ENCODE measurements at regions of chr10 and their contacts with region 1.

Region 1: DNA sequence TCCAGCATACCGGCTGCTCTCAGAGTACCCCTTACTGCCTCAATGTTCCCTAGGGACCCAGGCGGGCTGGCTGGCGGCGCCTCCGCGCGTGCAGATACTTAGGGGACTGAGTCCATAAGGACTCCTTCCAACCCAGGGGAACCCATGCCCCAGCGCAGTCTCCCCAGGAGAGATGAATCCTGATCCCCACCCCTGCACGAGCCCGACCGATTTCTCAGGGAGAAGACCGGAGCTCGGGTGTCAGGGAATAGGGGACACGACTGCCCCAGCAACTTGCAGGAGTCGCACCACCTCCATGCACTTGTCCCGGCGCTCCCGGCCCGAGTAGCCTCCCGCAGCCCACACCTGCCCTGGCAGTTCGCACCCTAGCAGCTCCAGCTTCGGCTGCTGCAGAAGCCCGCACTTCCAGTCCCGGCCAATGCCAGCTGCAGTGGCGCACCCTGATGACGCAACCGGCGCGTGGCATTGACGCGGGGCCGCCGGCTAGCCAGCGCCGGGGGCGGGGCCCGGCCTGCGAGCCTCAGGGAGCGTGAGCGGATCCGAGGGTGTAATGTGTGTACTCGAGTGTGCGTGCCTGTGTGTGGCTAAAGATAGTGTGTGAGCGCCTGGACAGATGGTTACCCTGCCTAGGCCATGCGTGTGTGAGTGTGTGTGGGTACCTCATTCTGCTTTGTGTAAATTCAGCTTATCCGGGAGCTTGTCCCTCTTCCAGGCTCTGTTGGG is at the start of gene GPAM:
- DNase-seq: peak; percentile 83 to 97
- H3K4me3 ChIP-seq: peak within 1 kb of the TSS; percentile 85 to 87
- H3K27ac ChIP-seq: peak within 1 kb of the TSS; percentile 73 to 82
- H3K4me1 ChIP-seq: peaks cover 0 to 17% of the 10 kb centered on the region in 2 donors
- H3K27me3 ChIP-seq: no peaks in the 10 kb centered on the region
- CTCF ChIP-seq: no peak
- total RNA-seq, gene GPAM: 3.2 TPM

Region 2: DNA sequence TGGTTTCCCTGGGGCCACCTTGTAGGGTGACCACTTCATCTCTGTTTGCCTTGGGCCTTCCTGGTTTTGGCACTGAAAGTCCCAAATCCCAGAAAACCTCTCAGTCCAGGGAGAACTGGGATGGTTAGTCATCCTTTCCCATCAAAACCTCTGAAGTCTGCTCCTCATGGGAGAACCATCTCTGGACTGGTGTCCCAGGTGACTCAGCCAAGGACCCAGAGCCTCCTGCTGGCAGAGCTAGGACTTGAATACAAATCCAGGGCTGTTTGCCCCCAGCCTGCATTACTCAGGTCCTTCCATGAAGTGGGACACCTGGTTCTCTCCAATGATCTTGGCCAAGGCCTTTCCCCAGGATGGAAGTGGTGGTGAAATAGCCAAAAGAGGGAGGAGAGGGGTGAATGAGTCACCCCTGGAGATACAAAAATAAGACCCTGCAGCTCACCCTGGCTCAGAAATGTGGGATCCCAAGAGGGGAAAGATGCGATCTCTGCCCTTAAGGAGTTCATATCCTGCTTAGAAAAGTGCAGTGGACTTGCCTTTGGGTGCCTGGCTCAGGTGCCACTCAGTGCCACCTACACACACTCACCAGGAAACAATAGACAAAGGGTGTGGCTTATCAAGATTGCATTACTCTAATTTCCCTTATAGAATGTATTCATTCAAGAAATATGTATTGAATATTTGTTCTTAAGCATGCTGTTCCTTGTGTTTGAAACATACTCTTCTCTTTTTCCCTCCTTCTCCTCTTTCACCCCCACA is 1084.6 kb before region 1 on chr10:
- intact Hi-C with region 1: no loop called
- DNase-seq: no peak
- H3K4me3 ChIP-seq: no peak overlapping the region
- H3K27ac ChIP-seq: no peak overlapping the region
- H3K4me1 ChIP-seq: no peaks in the 10 kb centered on the region
- H3K27me3 ChIP-seq: no peaks in the 10 kb centered on the region
- CTCF ChIP-seq: no peak

Region 3: DNA sequence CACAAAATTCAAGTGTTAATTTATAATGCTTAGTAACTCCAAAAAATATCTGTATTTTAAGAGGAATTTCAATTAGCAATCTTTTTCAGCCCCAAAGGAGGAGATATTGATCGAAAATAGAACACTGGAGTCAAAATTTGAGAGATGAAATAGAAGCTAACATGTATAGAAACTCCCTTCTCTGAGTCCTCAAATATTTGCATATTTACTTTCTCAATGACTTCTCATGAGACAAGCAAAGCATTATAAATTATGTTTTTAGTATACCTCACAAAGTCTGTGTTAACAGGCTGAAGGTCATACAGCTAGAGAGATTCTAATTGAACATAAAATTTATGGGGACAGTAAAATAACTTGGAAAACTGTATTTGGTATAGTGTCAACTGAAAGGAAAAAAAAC is 260.5 kb before region 1 on chr10:
- intact Hi-C with region 1: no loop called
- DNase-seq: no peak
- H3K4me3 ChIP-seq: no peak overlapping the region
- H3K27ac ChIP-seq: no peak overlapping the region
- H3K4me1 ChIP-seq: no peaks in the 10 kb centered on the region
- H3K27me3 ChIP-seq: no peaks in the 10 kb centered on the region
- CTCF ChIP-seq: no peak

Region 4: GRCh38 chr10:111996103-111996502 is 187.4 kb before region 1 on chr10:
- intact Hi-C with region 1: no loop called
- DNase-seq: no peak
- H3K4me3 ChIP-seq: no peak overlapping the region
- H3K27ac ChIP-seq: no peak overlapping the region
- H3K4me1 ChIP-seq: peaks cover 0 to 4% of the 10 kb centered on the region in 2 donors
- H3K27me3 ChIP-seq: no peaks in the 10 kb centered on the region
- CTCF ChIP-seq: no peak

Region 5: DNA sequence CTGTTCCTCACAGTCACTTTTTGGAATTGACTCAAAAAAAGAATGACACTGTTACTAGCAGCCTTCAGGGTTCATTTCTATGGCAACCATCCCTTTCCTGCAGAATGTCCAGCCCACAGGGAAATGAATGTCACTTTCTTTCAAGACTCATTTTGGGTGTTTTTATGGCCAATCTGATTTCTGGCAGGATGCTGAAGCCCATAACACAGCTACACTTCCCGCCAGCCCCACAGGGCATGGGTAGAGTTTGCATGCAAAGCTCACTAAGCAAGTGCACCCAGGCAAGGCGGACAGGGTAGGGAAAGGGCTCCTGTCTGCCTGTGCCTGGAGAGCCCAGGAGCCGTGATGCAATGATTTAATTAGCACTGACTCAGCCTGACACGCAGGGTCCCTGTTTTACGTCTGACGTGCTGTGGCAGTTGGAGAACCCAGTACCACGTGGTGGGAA is 26.2 kb after region 1 on chr10:
- intact Hi-C with region 1: loop called (anchors 2 kb)
- DNase-seq: no peak
- H3K4me3 ChIP-seq: no peak overlapping the region
- H3K27ac ChIP-seq: peak overlapping the region; percentile 65 to 73
- H3K4me1 ChIP-seq: peaks cover 5 to 20% of the 10 kb centered on the region in 2 donors
- H3K27me3 ChIP-seq: no peaks in the 10 kb centered on the region
- CTCF ChIP-seq: no peak

Region 6: DNA sequence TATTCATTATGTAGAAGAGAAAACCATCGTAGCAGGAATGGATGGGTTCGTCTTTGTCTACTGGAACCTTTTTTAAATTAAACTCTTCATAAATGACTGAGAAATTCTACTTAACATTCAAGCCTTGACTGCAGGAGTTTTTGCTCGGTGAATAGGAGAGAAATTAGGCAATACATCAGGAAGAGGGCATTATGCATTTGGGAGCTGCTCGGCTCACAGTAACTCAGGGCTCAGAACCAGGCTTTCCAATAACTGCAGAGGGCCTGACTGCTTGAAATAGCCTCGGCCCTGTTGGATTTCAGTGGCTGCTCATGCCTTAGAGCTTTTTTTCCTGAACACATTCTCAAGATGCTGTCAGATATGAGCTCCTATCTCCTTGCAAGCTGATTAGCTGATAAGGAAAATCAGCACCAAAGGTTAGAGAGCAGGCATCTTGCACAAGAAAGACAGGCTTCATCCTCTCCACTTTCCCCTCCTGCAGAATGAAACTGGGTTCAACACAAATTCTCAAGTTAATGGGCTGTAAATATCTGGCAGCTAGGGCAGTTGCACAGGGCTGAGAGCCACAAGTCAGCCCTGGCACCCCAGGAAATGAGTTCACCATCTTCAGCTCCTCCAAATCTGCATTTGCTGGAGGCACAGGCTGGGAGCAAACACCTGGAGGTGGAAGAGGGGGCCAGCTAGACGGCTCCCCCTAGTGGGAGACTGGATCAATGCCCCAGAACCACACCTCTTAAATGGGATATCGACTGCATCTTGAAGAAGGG is 124.1 kb after region 1 on chr10:
- intact Hi-C with region 1: loop called (anchors 5 kb)
- DNase-seq: peak in 1 of 2 donors; percentile 3
- H3K4me3 ChIP-seq: no peak overlapping the region
- H3K27ac ChIP-seq: no peak overlapping the region
- H3K4me1 ChIP-seq: no peaks in the 10 kb centered on the region
- H3K27me3 ChIP-seq: no peaks in the 10 kb centered on the region
- CTCF ChIP-seq: peak; percentile 36 to 64 (median 62)

Region 7: DNA sequence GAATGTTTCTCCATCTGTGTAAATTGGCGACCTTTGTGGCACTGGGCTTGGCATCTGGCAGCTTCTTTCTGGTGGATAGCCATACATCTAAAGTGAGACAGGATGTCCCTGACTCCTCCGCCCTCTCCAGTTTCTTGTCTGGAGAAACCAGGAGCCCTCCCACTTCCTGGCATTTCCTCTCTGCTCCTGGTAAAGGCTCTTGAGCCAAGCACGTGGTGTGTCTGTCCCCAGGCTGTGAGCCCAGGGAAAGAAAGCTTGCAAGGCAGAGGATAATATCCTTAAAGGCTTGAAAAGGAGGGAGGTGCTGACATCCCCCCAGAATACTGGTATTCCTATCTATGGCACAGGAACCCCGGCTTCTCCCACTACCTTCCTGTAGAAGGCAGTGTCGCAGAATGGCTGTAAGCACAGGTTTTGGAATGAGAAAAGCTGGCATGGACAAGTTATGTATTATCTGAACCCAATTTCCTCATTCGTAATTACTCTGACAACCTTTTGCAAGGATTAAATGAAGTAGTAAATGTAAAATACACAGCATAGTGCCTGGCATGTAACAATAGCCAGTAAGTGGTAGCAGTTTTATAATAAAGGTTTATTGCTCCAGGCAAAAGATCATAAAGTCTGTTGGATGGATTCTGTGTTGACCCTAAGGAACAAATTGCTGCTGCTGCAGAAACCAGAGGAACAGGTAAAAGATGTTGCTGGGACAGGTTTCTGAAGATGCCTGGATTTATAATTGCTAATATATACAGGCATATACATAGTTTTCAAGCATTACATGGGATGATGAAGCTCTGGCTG is 178.7 kb after region 1 on chr10:
- intact Hi-C with region 1: loop called (anchors 5 kb)
- DNase-seq: peak in 1 of 2 donors; percentile 87
- H3K4me3 ChIP-seq: no peak overlapping the region
- H3K27ac ChIP-seq: peak overlapping the region; percentile 58 to 69
- H3K4me1 ChIP-seq: peaks cover 10 to 26% of the 10 kb centered on the region in 2 donors
- H3K27me3 ChIP-seq: no peaks in the 10 kb centered on the region
- CTCF ChIP-seq: no peak

Region 8: GRCh38 chr10:112446855-112447711 is 263.6 kb after region 1 on chr10 and contains the starts of genes VTI1A and ZDHHC6:
- intact Hi-C with region 1: loop called (anchors 5 kb)
- DNase-seq: peak; percentile 24 to 91
- H3K4me3 ChIP-seq: peak within 1 kb of the TSS; percentile 72 to 88
- H3K27ac ChIP-seq: peak within 1 kb of the TSS; percentile 69 to 90
- H3K4me1 ChIP-seq: peaks cover 0 to 13% of the 10 kb centered on the region in 2 donors
- H3K27me3 ChIP-seq: no peaks in the 10 kb centered on the region
- CTCF ChIP-seq: peak in 2 of 3 experiments; percentile 17 to 20
- total RNA-seq, gene VTI1A: 32.5 TPM
- total RNA-seq, gene ZDHHC6: 67.3 TPM

Measured in ascending aorta (tissue), 2 donors.